ENCODE measurements at regions of chr4 and their contacts with region 1.

Region 1: DNA sequence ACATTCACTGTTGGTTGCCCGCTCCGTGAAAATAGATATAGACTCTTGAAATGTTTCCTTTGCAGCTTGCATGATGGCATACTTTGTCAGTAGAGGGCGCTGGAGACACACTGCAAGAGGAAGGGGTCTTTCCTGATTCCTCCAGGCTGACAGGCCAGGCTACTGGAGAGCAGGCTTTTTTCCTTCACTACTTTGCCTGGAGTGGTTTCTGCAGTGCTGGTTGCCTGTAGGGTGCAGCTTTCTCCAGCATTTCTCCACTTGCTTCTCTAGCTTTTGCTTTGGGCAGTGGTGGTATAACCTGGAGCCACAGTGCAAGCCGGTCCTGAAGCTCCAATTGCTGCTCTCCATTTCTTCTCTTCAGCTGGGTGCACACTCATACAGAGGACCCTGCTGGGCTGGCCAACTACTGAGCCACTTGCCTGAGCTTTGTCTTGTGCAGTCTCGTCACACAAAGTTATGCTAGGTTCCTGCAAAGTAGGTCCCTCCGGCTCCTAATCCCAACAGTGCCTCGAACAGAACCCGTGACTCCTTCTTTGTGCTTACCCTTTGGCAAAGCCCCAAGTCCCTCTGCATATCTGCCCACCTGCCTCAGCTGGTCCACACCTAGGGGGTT is 46.3 kb downstream of the RASSF6 start:
- DNase-seq: peak; percentile 4
- H3K4me3 ChIP-seq: no peak overlapping the region
- H3K27me3 ChIP-seq: no peaks in the 10 kb centered on the region; the same call in 1 of the 2 replicates
- CTCF ChIP-seq: peak; percentile 87

Region 2: DNA sequence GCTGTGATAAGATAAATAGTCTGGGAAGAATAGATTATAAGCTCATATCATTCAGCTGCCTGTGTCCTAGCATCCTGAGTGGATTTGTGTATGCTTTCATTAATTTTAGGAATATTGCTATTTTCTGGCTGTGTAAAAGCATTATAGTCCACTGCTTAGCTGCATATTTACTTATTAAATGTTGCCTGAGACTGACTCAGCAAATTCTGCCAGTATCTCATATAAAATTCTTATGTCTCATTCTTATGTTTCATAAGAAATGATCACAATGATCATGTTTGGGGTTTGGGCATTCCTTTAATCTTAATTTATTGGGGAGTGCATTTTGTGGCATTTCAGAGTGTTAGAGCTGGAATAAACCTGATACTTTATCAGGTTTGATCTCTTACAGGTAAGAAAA is 11.4 kb after region 1 on chr4:
- CTCF ChIA-PET with region 1: interaction called, 11 read pairs
- POLR2A ChIA-PET with region 1: no interaction called
- DNase-seq: no peak
- H3K4me3 ChIP-seq: no peak overlapping the region
- H3K27me3 ChIP-seq: no peaks in the 10 kb centered on the region
- CTCF ChIP-seq: no peak

Region 3: DNA sequence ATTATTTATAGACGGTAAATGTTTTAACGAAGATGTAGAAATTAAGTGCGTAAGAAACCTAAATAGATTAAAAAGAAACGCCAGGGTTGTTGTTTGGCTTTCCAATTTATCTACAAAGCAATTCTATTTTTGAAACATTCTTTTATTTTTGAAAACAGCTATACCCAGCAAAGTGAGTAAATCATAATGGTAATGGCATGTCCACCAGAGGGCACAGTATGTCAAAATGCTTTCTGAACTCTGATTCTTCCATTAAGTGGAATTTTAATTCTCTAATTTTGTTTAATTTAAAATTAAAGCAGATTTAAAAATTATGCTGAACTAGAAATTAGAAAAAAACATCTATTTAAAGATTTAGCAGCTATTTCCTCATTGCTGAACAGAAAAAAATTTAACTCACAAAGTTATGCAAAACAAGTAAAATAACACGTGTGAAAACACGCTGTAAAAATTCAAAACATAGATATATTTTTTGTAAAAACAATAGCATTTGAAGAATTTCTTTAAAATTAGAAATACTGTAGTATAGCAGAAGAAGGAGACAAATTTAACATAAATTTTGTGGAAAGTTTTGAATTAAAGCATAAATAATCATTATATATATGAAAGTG is 19.8 kb after region 1 on chr4:
- CTCF ChIA-PET with region 1: interaction called, 14 read pairs
- POLR2A ChIA-PET with region 1: no interaction called
- DNase-seq: no peak
- H3K4me3 ChIP-seq: no peak overlapping the region
- H3K27me3 ChIP-seq: no peaks in the 10 kb centered on the region
- CTCF ChIP-seq: peak; percentile 62

Region 4: DNA sequence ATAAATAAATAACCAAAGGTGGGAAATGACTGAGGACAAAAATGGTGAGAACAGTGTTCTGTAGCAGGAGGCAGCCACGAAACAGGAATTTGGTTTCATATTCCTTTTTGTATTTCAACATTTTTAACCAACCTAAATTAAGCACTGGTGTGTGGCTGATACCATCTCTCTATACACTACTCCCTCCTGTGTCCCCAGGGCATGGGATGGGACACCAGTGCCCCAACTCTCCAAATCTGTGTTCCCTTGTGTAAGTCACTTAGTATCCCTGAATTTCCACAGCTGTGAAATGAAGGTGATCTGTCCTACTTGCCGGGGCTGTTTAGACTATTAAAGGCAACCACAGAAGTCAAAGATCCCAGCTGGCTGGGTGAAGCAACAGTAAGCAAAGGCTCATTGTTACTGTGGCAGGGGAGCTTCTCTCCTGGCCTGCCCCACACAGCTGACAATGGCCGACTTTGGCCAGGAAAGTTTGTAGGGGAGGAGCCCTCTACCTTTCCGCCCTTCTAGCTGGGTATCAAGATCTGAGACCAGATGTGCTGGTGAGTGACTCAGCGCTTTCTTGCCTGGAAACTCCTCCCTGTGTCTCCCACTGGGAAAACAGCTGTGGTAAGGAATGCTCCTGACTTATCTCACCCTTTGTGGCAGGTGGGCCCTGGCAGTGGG is 25.1 kb after region 1 on chr4:
- CTCF ChIA-PET with region 1: interaction called, 14 read pairs
- POLR2A ChIA-PET with region 1: no interaction called
- DNase-seq: no peak
- H3K4me3 ChIP-seq: no peak overlapping the region
- H3K27me3 ChIP-seq: no peaks in the 10 kb centered on the region
- CTCF ChIP-seq: no peak

Region 5: DNA sequence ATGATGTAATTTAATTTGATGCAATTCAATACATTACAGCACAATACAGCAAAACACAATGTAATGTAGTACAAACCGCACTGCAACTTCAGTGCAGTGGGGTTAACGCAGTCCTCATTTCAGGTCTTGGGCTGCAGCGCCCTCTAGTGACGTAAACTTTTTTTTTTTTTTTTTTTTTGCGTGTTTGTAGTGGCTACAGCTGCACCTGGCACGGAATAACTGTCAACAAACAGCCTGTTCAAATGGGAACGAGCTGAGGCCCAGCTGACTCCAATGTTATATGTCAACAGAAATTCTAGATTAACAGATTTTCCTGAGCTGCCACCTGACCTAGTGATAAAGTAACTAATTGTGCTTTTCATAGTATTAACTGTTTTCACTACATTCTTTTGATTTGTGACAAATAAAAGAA is 79.8 kb after region 1 on chr4:
- CTCF ChIA-PET with region 1: interaction called, 41 read pairs
- POLR2A ChIA-PET with region 1: no interaction called
- DNase-seq: no peak
- H3K4me3 ChIP-seq: no peak overlapping the region
- H3K27me3 ChIP-seq: peaks cover 1% of the 10 kb centered on the region; the same call in 1 of the 2 replicates
- CTCF ChIP-seq: peak; percentile 59

Region 6: GRCh38 chr4:73776321-73776729 is 202.4 kb after region 1 on chr4:
- CTCF ChIA-PET with region 1: no interaction called
- POLR2A ChIA-PET with region 1: no interaction called
- DNase-seq: no peak
- H3K4me3 ChIP-seq: no peak overlapping the region
- H3K27me3 ChIP-seq: no peaks in the 10 kb centered on the region
- CTCF ChIP-seq: no peak

Region 7: GRCh38 chr4:74133786-74134499 is 560.0 kb after region 1 on chr4:
- CTCF ChIA-PET with region 1: interaction called, 24 read pairs
- POLR2A ChIA-PET with region 1: no interaction called
- DNase-seq: no peak
- H3K4me3 ChIP-seq: no peak overlapping the region
- H3K27me3 ChIP-seq: no peaks in the 10 kb centered on the region
- CTCF ChIP-seq: peak; percentile 83